Right ventricle myocardium superior (tissue), 1 donor: ENCODE measurements at regions of chr4 and their contacts with region 1.

Region 1: DNA sequence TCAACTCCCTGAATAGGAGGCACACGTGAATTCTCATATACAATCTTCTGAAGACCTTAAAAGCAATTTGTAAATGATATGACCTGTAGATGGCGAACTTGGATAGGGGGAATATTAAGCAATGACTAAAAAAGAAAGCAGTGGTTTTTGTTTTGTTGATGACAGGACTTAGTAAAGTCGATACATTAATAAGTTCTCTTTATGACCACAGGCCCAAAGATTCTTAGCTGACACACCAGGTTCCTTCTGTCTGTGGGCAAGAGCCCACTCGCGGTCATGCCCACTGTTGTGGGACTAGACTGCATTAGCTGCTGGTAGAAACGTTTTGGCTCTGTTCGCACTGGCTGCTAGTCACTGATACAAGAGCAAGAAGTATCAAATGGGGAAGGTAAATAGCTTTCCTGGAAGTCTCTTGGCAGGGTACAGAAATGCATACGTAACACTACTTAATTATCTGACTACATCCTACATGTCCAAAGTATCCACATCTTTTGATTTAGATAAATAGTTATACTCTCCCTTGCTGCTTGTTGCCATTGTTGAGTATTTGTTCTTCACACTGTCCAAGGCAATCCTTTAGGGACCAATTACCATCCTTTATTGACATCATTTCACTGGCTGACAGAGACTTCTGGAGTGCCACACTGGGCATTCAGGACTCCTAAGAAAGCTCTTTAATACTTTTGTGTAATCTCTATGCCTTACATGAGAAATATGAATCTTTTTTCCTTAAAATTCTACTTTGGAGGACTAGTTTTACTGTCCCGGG is 31.0 kb downstream of the ALPK1 start:
- DNase-seq: no peak
- ATAC-seq: peak; percentile 61

Region 2: DNA sequence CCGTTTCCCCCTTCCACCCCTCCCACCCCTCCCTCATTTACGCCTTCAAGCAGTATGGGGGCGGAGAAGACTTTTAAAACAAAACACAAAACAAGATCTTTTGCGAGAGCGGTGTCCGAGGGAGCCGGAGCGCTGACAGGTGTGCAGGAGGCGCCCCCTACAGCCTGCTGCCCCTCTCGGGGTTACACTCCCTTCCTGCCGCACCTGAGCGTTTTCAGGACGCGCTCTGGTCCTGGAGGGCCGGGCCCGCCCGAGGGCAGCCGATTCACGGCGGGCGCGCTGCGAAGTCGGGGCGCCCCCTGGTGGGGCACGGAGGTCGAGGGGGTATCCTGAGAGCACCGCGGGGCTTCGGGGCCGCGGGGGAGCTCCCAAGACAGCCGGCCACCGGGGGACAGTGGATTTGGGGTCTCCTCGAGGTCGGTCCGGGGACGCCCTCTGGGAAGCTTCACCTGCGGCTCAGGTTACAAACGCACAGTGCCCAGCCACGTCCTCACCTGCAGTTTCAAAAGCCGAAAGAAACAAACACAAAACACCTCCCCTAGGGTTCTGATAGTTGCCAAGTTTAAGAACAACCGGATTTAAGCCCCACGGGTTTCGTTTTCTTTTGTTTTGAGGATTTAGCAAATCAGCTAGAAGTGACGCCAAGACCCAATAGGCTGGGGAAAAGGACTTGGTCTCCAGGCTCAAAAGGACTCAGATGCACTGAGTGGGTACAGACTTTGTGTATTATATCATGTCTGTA is 195.8 kb after region 1 on chr4:
- intact Hi-C with region 1: loop called (anchors 5 kb)
- DNase-seq: peak; percentile 68
- ATAC-seq: peak; percentile 81

Region 3: GRCh38 chr4:112604589-112604988 is 276.4 kb after region 1 on chr4:
- intact Hi-C with region 1: loop called (anchors 2 kb)
- DNase-seq: no peak
- ATAC-seq: peak; percentile 79